AG04450 (cell line): ENCODE measurements at regions of chr3 and their contacts with region 1.

Region 1: DNA sequence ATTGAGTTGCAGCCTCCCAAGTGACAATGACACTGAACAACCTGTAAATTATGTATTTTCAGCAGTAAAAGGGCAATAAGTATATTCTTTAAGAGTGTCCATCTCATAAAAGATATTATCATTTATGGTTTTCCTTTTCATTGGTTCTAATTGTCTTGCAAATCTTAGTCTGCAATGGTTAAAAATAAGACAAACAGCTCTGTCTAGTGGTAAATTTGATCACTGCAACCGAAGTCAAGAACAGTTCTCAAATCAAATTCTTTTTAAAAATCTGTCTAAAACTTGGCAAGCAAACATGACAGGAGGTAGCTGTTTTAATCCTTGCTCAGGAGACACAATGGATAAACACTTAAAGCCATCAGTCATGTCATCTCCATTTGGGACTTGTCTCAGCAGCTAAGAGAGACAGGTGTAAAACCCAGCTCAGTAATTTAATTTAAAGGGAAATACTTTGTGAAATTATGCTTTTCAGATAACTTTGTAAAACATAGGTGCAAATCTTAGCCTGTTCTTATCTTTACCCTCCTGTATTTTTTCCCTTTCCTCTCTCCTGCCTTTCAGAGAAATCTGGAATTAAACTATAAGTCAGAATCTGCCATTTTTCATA is 150.3 kb upstream of the ARHGEF26 start:
- DNase-seq: no peak
- H3K4me3 ChIP-seq: no peak overlapping the region
- H3K27ac ChIP-seq: no peak overlapping the region
- H3K27me3 ChIP-seq: no peaks in the 10 kb centered on the region
- CTCF ChIP-seq: peak; percentile 58

Region 2: GRCh38 chr3:154003649-154004048 is 32.8 kb after region 1 on chr3:
- CTCF ChIA-PET with region 1: interaction called, 10 read pairs
- POLR2A ChIA-PET with region 1: no interaction called
- DNase-seq: no peak
- H3K4me3 ChIP-seq: no peak overlapping the region
- H3K27ac ChIP-seq: no peak overlapping the region
- H3K27me3 ChIP-seq: no peaks in the 10 kb centered on the region
- CTCF ChIP-seq: no peak